HepG2 (cell line): ENCODE measurements at regions of chr6 and their contacts with region 1.

Region 1: DNA sequence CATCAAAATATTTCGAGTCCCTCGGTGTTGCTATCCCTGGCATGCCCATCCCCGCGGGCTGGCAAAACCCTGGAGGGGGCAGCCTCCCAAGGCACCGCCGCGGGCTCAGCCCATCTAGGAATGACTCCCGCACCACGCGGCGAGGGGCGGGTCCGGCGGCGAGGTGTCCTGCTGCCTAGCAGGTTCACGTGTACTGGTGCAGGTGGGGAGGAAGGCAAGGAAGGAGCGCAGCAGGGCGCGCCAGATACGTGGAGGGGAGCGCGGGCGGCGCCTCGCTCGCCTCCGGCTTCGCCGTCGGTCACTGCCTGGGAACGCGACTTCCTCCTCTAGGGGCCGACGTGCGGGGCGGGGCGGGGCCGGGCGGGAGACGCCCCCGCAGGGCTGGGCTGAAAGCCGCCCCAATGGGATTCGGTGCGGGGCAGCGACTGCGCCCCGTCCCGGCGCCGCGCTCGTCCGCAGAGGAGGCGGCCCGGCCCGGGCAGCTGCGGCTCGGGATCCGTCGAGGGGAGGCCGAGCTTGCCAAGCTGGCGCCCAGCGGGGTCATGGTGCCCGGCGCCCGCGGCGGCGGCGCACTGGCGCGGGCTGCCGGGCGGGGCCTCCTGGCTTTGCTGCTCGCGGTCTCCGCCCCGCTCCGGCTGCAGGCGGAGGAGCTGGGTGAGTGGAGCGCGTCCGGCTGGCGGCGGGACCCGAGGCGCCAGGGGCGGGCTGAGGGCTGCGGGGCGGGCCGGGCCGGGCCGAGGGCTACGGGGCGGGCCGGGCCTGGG is at the start of gene DCBLD1:
- DNase-seq: peak; percentile 78
- ATAC-seq: peak; percentile 75
- H3K4me3 ChIP-seq: peak within 1 kb of the TSS; percentile 86 to 92 (median 91)
- H3K27ac ChIP-seq: peak within 1 kb of the TSS; percentile 91
- H3K4me1 ChIP-seq: peaks cover 82% of the 10 kb centered on the region
- H3K27me3 ChIP-seq: no peaks in the 10 kb centered on the region; a peak in 1 of 5 replicates
- CTCF ChIP-seq: peak; percentile 38; the same call in 1 of the 2 replicates
- EP300 ChIP-seq: no peak; a peak in 1 of 4 replicates
- POLR2A ChIP-seq: peak; percentile 85 to 88
- RAD21 ChIP-seq: peak; percentile 64
- total RNA-seq, gene DCBLD1: 26.0 and 41.5 TPM in 2 replicates

Region 2: DNA sequence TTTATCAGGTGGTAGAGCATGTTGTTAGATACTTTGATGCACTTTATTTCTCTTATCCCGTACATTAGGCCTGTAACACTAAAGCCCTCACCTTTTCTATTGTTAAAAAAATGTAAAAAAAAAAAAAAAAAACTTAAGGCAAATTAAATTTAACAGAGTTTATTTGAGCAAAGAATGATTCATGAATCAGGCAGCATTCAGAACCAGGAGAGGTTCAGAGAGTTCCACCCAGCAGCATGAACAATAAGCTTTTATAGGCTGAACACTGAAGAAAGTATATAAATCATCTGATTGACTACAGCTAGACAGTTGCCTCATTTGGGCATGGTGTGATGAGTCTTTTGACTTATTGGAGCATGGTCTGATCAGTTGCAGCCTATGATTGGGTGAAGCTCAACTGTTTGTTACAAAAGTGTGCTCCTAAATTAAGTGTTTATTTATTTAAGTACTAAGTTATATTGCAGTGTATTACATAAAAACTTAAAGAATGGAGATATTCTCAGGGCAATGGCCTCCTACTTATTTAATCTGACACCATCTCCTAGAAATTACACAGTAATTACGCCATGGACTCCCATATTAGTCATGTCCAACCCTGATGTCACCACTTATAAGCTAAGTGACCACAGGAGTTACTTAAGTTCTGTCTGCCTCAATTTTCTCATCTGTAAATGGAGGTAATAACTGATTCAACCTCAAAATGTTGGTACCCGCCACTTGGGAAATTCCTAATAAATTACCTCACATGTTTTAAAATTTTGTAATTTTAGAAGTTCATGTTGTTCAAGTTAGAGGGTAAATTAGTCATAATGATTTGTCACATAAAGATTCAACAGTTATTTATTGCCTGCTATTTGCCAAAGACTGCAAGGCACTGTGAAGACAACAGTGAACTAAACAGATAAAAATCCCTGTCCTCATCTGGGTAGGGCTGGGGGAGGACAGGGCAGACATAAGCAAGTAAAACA is 41.6 kb before region 1 on chr6:
- CTCF ChIA-PET with region 1: no interaction called
- POLR2A ChIA-PET with region 1: interaction called, 3 read pairs
- in situ Hi-C with region 1: no loop called
- intact Hi-C with region 1: loop called (anchors 5 kb)
- DNase-seq: no peak
- ATAC-seq: no peak
- H3K4me3 ChIP-seq: no peak overlapping the region
- H3K27ac ChIP-seq: no peak overlapping the region
- H3K4me1 ChIP-seq: peaks cover 21% of the 10 kb centered on the region
- H3K27me3 ChIP-seq: no peaks in the 10 kb centered on the region
- CTCF ChIP-seq: no peak
- EP300 ChIP-seq: no peak
- POLR2A ChIP-seq: no peak
- RAD21 ChIP-seq: no peak

Region 3: DNA sequence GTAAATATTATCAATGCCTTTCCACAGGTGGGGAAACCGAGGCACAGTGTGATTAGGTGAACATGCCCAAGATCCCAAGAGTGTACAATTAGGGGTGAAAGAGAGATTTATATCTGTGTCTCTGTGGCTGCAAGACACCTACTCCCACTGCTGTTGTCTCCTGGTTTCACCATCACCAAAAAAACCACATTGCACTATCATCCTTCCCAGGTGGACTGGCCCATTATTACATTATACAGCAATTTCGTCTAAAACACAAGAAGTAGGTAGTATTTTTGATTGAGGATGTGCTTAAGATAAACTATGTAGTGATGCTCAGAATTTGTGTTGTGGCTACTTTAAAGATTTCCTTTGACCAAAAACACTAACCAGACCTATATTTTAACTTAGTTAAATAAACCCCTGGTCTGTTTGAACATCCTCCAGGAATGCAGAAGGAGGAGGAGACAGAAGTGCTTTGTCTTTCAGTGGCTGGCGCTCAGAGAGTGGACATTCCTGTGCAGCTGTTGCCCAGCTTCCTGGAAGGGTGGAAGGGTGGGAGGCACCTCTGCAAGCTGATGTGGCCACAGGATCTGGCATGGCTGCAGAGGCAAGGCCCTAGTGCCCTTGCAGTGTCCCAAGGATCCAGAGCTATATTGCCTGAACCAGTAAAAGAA is 23.9 kb after region 1 on chr6:
- CTCF ChIA-PET with region 1: no interaction called
- POLR2A ChIA-PET with region 1: interaction called, 19 read pairs
- in situ Hi-C with region 1: no loop called
- intact Hi-C with region 1: loop called (anchors 2 kb)
- DNase-seq: peak; percentile 91
- ATAC-seq: peak; percentile 96
- H3K4me3 ChIP-seq: no peak overlapping the region; a peak in 1 of 6 replicates
- H3K27ac ChIP-seq: peak overlapping the region; percentile 17
- H3K4me1 ChIP-seq: peaks cover 80% of the 10 kb centered on the region
- H3K27me3 ChIP-seq: no peaks in the 10 kb centered on the region
- CTCF ChIP-seq: no peak
- EP300 ChIP-seq: peak in 1 of 2 experiments; percentile 67; a peak in 1 of 4 replicates
- POLR2A ChIP-seq: no peak
- RAD21 ChIP-seq: no peak

Region 4: GRCh38 chr6:117547688-117548621 is 65.5 kb after region 1 on chr6:
- CTCF ChIA-PET with region 1: no interaction called
- POLR2A ChIA-PET with region 1: interaction called, 8 read pairs
- in situ Hi-C with region 1: loop called (anchors 5 kb)
- intact Hi-C with region 1: no loop called
- DNase-seq: no peak
- ATAC-seq: no peak
- H3K4me3 ChIP-seq: no peak overlapping the region
- H3K27ac ChIP-seq: peak overlapping the region; percentile 40
- H3K4me1 ChIP-seq: peaks cover 31% of the 10 kb centered on the region
- H3K27me3 ChIP-seq: no peaks in the 10 kb centered on the region
- CTCF ChIP-seq: no peak
- EP300 ChIP-seq: no peak
- POLR2A ChIP-seq: no peak
- RAD21 ChIP-seq: no peak

Region 5: DNA sequence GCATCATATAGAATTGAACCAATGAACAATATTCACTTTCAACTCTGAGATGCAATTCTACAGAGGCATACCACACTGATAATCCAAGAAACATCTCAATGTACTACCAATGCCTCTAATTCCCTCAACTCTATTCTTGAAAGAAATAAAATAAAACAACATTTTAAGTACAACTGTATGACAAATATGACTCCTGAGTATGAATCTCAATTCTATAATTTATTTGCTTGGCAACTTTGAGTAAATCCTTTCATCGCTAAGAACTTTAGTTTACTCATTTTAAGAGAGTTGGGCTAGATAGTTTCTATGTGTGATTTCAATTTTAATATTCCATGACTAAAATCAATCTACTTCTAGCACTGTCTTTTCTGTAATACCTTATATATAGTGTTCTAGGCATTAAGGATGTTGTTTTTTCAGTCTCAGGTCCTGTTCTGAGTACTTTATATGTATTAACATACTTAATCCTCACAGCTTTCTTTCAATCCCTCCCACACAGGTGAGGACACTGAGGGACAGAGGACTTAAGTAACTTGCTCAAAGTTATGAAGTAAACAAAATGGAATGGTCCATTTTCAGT is 86.5 kb after region 1 on chr6:
- CTCF ChIA-PET with region 1: no interaction called
- POLR2A ChIA-PET with region 1: no interaction called
- in situ Hi-C with region 1: no loop called
- intact Hi-C with region 1: no loop called
- DNase-seq: no peak
- ATAC-seq: no peak
- H3K4me3 ChIP-seq: no peak overlapping the region
- H3K27ac ChIP-seq: no peak overlapping the region
- H3K4me1 ChIP-seq: no peaks in the 10 kb centered on the region
- H3K27me3 ChIP-seq: no peaks in the 10 kb centered on the region
- CTCF ChIP-seq: no peak
- EP300 ChIP-seq: no peak
- POLR2A ChIP-seq: no peak
- RAD21 ChIP-seq: no peak

Region 6: GRCh38 chr6:117674991-117675657 is 192.7 kb after region 1 on chr6 and contains the start of gene NUS1:
- CTCF ChIA-PET with region 1: no interaction called
- POLR2A ChIA-PET with region 1: no interaction called
- in situ Hi-C with region 1: no loop called
- intact Hi-C with region 1: loop called (anchors 1 kb)
- DNase-seq: peak; percentile 97
- ATAC-seq: peak; percentile 96
- H3K4me3 ChIP-seq: peak within 1 kb of the TSS; percentile 86 to 93 (median 88)
- H3K27ac ChIP-seq: peak within 1 kb of the TSS; percentile 62
- H3K4me1 ChIP-seq: peaks cover 55% of the 10 kb centered on the region
- H3K27me3 ChIP-seq: no peaks in the 10 kb centered on the region; a peak in 1 of 5 replicates
- CTCF ChIP-seq: peak; percentile 100
- EP300 ChIP-seq: peak; percentile 29 to 46; a peak in 1 of 4 replicates
- POLR2A ChIP-seq: peak; percentile 50 to 82
- RAD21 ChIP-seq: peak; percentile 62
- total RNA-seq, gene NUS1: 18.3 and 36.5 TPM in 2 replicates